Ascending aorta (tissue), 2 donors: ENCODE measurements at regions of chr11 and their contacts with region 1.

Region 1: GRCh38 chr11:69296890-69297786 is 3.2 kb downstream of the MYEOV start:
- DNase-seq: peak; percentile 85 to 98
- H3K4me3 ChIP-seq: peak overlapping the region in 1 of 2 donors; percentile 39
- H3K27ac ChIP-seq: peak overlapping the region; percentile 85 to 93
- H3K4me1 ChIP-seq: peaks cover 25 to 36% of the 10 kb centered on the region in 2 donors
- H3K27me3 ChIP-seq: no peaks in the 10 kb centered on the region
- CTCF ChIP-seq: no peak

Region 2: DNA sequence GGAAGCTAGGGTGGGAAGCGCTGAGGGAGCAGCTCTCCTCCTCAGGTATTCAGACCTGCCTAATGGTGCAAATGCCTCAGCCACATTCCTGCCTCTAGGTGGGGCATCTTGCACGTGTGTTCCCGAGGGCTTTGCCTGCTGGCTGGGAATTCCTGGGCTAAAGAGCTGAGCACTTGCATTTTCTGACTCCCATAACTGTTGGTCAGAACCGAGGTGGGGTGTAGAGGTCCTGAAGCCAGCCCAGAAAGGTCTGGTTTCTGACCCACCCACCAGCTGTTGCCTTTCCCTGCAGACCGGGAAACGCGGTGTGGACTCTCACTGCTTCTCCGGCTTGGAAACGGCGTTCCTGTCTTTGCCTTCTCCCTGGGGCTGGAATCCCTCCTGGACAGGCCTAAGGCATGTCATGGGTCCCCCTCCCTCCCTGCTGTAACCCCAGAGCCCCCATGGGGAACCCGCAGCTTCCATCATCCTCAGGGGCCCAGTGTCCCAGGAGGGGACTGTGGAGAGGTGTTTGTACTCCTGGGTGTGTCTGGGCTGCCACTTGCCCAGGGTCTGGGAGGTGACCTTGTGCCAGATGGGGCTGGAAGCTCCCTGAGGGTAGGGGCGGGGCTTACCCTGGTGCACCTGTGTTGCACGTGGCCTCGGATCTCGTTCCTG is 165.4 kb before region 1 on chr11:
- intact Hi-C with region 1: loop called (anchors 2 kb)
- DNase-seq: peak; percentile 26 to 84
- H3K4me3 ChIP-seq: no peak overlapping the region
- H3K27ac ChIP-seq: peak overlapping the region; percentile 72 to 73
- H3K4me1 ChIP-seq: peaks cover 0 to 21% of the 10 kb centered on the region in 2 donors
- H3K27me3 ChIP-seq: no peaks in the 10 kb centered on the region
- CTCF ChIP-seq: peak; percentile 85 to 89 (median 86)

Region 3: GRCh38 chr11:69321877-69322361 is 24.8 kb after region 1 on chr11:
- intact Hi-C with region 1: loop called (anchors 1 kb)
- DNase-seq: peak; percentile 78 to 94
- H3K4me3 ChIP-seq: no peak overlapping the region
- H3K27ac ChIP-seq: peak overlapping the region; percentile 86 to 90
- H3K4me1 ChIP-seq: peaks cover 8 to 20% of the 10 kb centered on the region in 2 donors
- H3K27me3 ChIP-seq: no peaks in the 10 kb centered on the region
- CTCF ChIP-seq: no peak

Region 4: GRCh38 chr11:69417146-69418085 is 120.3 kb after region 1 on chr11:
- intact Hi-C with region 1: loop called (anchors 5 kb)
- DNase-seq: no peak
- H3K4me3 ChIP-seq: no peak overlapping the region
- H3K27ac ChIP-seq: peak overlapping the region; percentile 63 to 66
- H3K4me1 ChIP-seq: peaks cover 6 to 32% of the 10 kb centered on the region in 2 donors
- H3K27me3 ChIP-seq: no peaks in the 10 kb centered on the region
- CTCF ChIP-seq: no peak